CD4-positive, alpha-beta memory T cell (primary cell): ENCODE measurements at regions of chr1 and their contacts with region 1.

Region 1: DNA sequence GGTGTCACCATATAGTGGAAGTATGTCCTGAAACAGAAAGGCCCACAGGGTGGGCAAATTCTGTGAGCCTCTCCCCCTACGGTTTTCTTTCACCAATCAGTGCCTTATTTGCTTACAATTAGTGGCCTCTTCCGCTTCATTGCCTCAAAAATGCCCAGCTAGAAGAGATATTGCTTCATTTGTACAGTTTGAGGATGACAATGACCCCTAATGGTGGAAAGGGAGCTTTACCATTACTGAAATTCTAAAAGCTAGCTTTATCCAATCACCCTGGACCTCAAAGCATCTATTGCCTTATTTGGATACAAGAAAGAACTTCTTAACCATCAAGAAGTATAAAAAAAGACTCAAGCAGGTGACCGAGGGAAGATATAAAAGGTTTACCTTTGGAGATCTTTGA is 49.6 kb downstream of the LRRC71 start:
- DNase-seq: peak in 4 of 5 donors; percentile 4 to 17 (median 10)
- H3K4me3 ChIP-seq: no peak overlapping the region
- H3K4me3 Mint-ChIP-seq: no peak overlapping the region
- H3K27ac ChIP-seq: no peak overlapping the region
- H3K27ac Mint-ChIP-seq: no peak overlapping the region
- H3K4me1 ChIP-seq: no peaks in the 10 kb centered on the region
- H3K4me1 Mint-ChIP-seq: peaks cover 0 to 3% (median 0%) of the 10 kb centered on the region in 4 donors
- H3K27me3 ChIP-seq: no peaks in the 10 kb centered on the region
- H3K27me3 Mint-ChIP-seq: peaks cover 12 to 17% of the 10 kb centered on the region in 2 donors

Region 2: DNA sequence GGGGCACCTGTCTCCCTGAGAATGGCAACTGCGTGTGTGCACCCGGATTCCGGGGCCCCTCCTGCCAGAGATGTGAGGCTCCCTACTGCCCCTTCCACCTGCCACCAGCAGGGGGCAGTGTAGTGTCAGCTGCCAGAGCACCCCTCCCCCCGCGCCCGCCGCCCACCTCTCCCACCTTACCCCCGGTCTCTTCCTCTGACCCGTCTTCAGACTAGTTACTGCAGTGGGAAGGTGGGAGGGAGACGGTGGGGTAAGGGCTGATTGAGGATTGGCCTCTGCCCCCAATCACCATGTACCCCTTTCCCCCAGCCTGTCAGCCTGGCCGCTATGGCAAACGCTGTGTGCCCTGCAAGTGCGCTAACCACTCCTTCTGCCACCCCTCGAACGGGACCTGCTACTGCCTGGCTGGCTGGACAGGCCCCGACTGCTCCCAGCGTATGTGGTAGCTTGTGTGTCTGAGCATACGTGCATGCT is 59.7 kb before region 1 on chr1:
- CTCF ChIA-PET with region 1: interaction called, 38 read pairs
- POLR2A ChIA-PET with region 1: interaction called, 3 read pairs
- intact Hi-C with region 1: loop called (anchors 1 kb)
- DNase-seq: peak; percentile 36 to 52 (median 46)
- H3K4me3 ChIP-seq: no peak overlapping the region
- H3K4me3 Mint-ChIP-seq: no peak overlapping the region
- H3K27ac ChIP-seq: no peak overlapping the region
- H3K27ac Mint-ChIP-seq: peak overlapping the region in 1 of 7 donors; percentile 48
- H3K4me1 ChIP-seq: no peaks in the 10 kb centered on the region
- H3K4me1 Mint-ChIP-seq: peaks cover 0 to 2% (median under 1%) of the 10 kb centered on the region in 4 donors
- H3K27me3 ChIP-seq: peaks cover 4% of the 10 kb centered on the region
- H3K27me3 Mint-ChIP-seq: peaks cover 11 to 24% of the 10 kb centered on the region in 2 donors

Region 3: DNA sequence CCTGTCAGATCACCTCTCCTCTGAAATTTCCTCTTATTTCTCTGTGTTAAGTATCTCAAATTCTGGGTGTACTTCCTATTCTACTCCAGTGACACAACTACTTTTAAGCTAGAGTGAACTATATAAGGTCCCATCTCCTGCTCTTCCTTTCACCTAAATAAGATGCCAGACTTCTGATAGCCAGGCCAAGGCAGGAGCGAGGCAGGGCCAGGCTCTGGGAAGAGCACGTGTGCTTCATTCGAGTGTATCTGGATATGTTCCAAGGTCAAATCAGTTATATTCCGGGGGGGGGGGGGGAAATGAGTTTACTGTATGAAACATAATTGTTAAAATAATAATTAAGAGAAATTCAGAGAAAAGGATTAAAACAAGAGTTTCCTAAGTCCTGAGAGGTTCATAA is 10.5 kb after region 1 on chr1:
- CTCF ChIA-PET with region 1: interaction called, 10 read pairs
- POLR2A ChIA-PET with region 1: no interaction called
- intact Hi-C with region 1: no loop called
- DNase-seq: no peak
- H3K4me3 ChIP-seq: no peak overlapping the region
- H3K4me3 Mint-ChIP-seq: no peak overlapping the region
- H3K27ac ChIP-seq: no peak overlapping the region
- H3K27ac Mint-ChIP-seq: no peak overlapping the region
- H3K4me1 ChIP-seq: no peaks in the 10 kb centered on the region
- H3K4me1 Mint-ChIP-seq: no peaks in the 10 kb centered on the region
- H3K27me3 ChIP-seq: no peaks in the 10 kb centered on the region
- H3K27me3 Mint-ChIP-seq: peaks cover 32 to 35% of the 10 kb centered on the region in 2 donors

Region 4: GRCh38 chr1:157618190-157618589 is 648.2 kb after region 1 on chr1:
- CTCF ChIA-PET with region 1: no interaction called
- POLR2A ChIA-PET with region 1: no interaction called
- intact Hi-C with region 1: no loop called
- DNase-seq: no peak
- H3K4me3 ChIP-seq: no peak overlapping the region
- H3K4me3 Mint-ChIP-seq: no peak overlapping the region
- H3K27ac ChIP-seq: no peak overlapping the region
- H3K27ac Mint-ChIP-seq: no peak overlapping the region
- H3K4me1 ChIP-seq: no peaks in the 10 kb centered on the region
- H3K4me1 Mint-ChIP-seq: no peaks in the 10 kb centered on the region
- H3K27me3 ChIP-seq: no peaks in the 10 kb centered on the region
- H3K27me3 Mint-ChIP-seq: peaks cover 0 to 2% of the 10 kb centered on the region in 2 donors